PC-3 (cell line): ENCODE measurements at regions of chr7 and their contacts with region 1.

Region 1: GRCh38 chr7:13850185-13850752 is 139.2 kb downstream of the ETV1 start:
- DNase-seq: peak; percentile 97
- ATAC-seq: peak; percentile 90
- H3K4me3 ChIP-seq: no peak overlapping the region
- H3K27ac ChIP-seq: peak overlapping the region; percentile 95
- H3K4me1 ChIP-seq: peaks cover 49% of the 10 kb centered on the region
- H3K27me3 ChIP-seq: no peaks in the 10 kb centered on the region
- CTCF ChIP-seq: no peak

Region 2: DNA sequence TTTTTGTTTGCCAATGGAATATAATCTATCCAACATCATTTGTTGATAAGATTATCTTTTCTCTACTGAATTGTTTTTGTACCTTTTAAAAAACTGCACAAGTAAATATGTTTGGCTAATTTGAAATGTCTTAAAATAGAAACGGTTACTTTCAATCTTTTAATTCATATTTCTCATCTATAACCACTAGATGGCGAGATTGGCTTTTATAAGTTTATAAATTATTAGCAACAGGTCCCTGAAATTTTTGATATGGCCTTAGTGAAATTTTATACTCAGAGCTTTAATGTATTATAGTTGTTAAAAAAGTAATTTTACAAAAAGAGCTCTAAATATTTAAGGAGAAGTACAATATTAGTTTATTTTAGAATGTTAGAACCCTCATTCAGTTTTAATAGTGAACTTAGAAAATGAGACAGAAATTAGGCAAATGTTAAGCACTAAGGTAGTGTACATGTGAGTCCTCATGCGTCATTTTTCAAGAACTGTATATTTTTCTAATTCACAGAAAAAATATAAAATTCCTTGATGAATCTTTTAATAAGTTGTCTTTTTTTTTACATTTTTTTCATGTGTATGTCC is 570.3 kb before region 1 on chr7:
- CTCF ChIA-PET with region 1: interaction called, 3 read pairs
- POLR2A ChIA-PET with region 1: no interaction called
- intact Hi-C with region 1: loop called (anchors 5 kb)
- DNase-seq: peak; percentile 63
- ATAC-seq: no peak; the same call in 1 of the 2 replicates
- H3K4me3 ChIP-seq: no peak overlapping the region
- H3K27ac ChIP-seq: no peak overlapping the region
- H3K4me1 ChIP-seq: no peaks in the 10 kb centered on the region
- H3K27me3 ChIP-seq: no peaks in the 10 kb centered on the region
- CTCF ChIP-seq: peak; percentile 69

Region 3: GRCh38 chr7:13433946-13434345 is 416.3 kb before region 1 on chr7:
- CTCF ChIA-PET with region 1: no interaction called
- POLR2A ChIA-PET with region 1: no interaction called
- intact Hi-C with region 1: no loop called
- DNase-seq: no peak
- ATAC-seq: no peak
- H3K4me3 ChIP-seq: no peak overlapping the region
- H3K27ac ChIP-seq: no peak overlapping the region
- H3K4me1 ChIP-seq: no peaks in the 10 kb centered on the region
- H3K27me3 ChIP-seq: no peaks in the 10 kb centered on the region
- CTCF ChIP-seq: no peak

Region 4: DNA sequence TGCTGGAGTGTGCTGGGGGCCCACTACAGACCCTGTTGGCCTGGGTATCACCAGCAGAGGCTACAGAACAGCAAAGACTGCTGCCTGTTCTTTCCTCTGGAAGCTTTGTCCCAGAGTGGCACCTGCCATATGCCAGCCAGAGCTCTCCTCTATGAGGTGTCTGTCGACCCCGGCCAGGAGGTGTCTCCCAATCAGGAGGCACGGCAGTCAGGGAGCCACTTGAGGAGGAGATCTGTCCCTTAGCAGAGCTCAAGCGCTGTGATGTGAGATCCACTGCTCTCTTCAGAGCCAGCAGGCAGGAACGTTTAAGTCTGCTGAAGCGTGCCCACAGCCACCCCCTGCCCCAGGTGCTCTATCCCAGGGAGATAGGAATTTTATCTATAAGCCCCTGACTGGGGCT is 177.0 kb before region 1 on chr7:
- CTCF ChIA-PET with region 1: no interaction called
- POLR2A ChIA-PET with region 1: no interaction called
- intact Hi-C with region 1: loop called (anchors 1 kb)
- DNase-seq: no peak
- ATAC-seq: no peak
- H3K4me3 ChIP-seq: no peak overlapping the region
- H3K27ac ChIP-seq: no peak overlapping the region
- H3K4me1 ChIP-seq: peaks cover 9% of the 10 kb centered on the region
- H3K27me3 ChIP-seq: no peaks in the 10 kb centered on the region
- CTCF ChIP-seq: no peak

Region 5: DNA sequence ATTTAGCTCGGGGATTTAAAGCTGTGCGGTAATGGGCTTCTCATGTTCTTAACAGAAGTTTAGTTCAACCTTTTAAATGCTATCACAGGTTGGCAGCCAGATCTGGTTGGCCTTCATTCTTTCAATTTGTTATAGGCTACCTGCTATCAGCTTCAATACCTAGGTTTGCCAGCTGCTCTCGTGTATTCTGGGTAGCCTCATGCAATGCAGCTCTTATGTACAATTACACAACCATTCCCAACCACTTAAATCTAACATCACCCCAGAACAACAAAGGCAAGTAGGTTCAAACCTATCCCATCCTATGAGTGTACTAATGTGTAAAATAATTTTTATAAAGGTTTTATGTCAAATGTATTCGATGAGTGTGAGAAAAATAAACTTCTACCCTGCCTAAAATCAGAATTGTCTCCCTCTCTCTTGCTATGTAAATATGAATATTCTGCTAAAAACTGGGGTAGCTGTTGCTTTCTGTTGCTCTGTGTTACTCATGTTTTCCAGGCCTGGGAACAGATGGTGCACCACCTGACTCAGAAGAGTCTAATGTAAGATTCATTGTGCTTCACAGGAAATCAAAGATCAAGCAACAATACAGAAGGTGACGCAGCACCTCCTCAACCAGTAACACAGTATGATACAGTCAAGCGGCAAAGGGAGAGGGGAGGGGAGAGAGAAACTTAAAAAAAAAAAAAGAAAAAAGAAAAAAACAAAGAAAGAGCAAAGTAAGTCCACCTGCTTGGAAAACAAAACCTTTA is 49.4 kb before region 1 on chr7:
- CTCF ChIA-PET with region 1: no interaction called
- POLR2A ChIA-PET with region 1: no interaction called
- intact Hi-C with region 1: loop called (anchors 2 kb)
- DNase-seq: peak; percentile 86
- ATAC-seq: peak; percentile 98
- H3K4me3 ChIP-seq: no peak overlapping the region
- H3K27ac ChIP-seq: peak overlapping the region; percentile 97
- H3K4me1 ChIP-seq: peaks cover 14% of the 10 kb centered on the region
- H3K27me3 ChIP-seq: no peaks in the 10 kb centered on the region
- CTCF ChIP-seq: no peak

Region 6: DNA sequence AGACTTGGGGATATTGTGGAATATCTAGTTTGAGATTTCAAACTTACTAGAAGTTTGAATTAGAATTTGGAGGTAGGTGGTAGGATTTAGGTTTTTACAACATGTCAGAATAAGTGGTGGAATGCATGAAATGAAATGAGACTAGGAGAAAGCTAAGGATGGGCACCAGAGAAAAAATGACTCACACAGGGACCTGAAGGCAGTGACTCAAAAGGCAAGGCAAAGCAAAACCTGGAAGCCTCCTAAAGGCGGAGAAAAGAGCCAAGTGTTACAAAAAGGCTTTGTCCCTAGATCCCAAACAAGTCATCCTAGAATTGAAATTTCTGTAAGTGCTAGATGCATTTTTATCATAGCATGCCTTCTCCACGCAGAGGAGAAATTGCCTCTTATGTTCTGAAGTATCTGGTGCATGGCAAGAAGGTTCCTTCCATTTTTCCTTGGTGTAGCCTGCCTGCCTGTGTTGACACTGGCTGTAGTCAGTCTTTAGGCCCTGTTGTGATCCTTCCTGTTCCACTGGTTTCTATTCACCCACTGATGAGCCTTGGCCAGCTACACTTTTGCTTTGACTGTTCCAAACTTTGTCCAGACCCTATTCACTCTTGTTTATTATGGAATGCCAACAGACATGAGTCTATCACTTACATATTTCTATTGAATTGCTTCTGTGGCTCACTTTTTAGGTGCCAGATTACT is 29.9 kb after region 1 on chr7:
- CTCF ChIA-PET with region 1: no interaction called
- POLR2A ChIA-PET with region 1: no interaction called
- intact Hi-C with region 1: loop called (anchors 2 kb)
- DNase-seq: peak; percentile 85
- ATAC-seq: peak; percentile 88
- H3K4me3 ChIP-seq: peak overlapping the region; percentile 16; the same call in 1 of the 2 replicates
- H3K27ac ChIP-seq: peak overlapping the region; percentile 90
- H3K4me1 ChIP-seq: peaks cover 42% of the 10 kb centered on the region
- H3K27me3 ChIP-seq: no peaks in the 10 kb centered on the region
- CTCF ChIP-seq: no peak

Region 7: DNA sequence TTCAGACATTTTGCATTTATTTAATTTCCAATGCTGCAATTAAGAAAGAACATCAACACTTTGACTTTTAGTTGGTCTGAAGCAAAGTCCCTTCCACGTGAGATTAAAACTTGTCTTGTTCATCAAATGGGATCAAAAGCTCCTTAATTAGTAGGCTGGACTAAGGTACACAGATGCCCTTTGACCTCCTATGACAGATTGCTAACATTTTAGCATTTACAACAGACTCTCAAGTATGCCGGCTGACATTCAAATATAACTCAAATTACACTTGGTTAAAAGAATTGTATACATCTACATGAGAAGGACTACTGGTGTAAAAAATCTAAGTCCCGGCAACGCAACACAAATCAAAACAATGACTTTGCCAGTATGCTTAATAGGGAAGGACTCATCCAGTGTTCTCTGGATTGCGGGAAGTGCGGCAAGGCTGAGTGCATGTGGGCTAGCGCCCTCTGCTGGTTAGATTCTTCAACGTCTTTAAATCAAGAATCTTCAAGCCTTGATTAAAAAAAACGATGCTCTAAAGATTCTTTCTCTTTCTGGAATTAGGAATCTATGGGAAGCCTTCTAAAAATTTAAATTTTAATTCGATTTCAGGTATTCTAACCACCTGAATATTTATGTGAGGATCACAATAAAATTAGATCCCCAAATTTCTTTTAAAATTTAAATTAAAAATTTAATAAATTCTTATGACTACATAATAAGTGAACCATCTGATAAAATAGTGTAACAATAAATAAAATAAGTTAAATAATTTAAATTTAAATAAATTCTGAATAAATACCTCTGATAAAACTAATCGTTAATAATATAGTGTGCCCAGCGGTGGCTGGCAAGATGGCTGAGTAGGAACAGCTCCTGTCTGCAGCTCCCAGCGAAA is 607.5 kb after region 1 on chr7:
- CTCF ChIA-PET with region 1: no interaction called
- POLR2A ChIA-PET with region 1: no interaction called
- intact Hi-C with region 1: loop called (anchors 5 kb)
- DNase-seq: peak; percentile 84
- ATAC-seq: peak; percentile 92
- H3K4me3 ChIP-seq: peak overlapping the region; percentile 60
- H3K27ac ChIP-seq: no peak overlapping the region
- H3K4me1 ChIP-seq: 0 out of 2 replicates have a peak, but pooled peaks cover 4% of the 10 kb centered on the region
- H3K27me3 ChIP-seq: no peaks in the 10 kb centered on the region
- CTCF ChIP-seq: peak; percentile 85